ENCODE measurements at regions of chr6 and their contacts with region 1.

Region 1: DNA sequence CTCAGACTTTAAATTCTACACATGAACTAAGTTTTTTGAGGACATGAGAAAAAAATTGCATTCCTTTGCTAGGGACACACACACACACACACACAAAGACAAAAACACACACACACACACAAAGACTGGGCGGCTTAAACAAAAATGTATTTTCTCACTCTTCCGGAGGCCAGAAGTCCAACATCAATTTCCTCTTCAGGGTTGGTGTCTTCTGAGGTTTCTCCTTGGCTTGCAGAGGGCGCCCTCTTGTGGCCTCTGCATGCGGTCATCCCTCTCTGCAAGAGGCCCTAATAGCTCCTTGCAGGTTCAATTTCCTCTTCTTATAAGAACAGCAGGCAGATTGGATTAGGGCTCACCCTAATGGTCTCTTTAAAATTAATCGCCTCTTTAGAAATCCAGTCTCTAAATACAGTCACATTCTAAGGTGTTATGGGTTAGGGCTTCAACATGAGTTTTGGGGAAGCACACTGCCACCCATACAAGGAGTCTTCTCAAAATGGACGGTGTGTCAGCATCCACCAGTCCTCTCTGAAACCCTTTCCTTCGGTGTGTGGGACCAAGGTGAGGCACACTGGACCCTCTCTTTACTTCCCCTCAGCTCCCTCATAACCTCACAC is 61.4 kb downstream of the GPR6 start:
- DNase-seq: peak; percentile 90
- ATAC-seq: peak; percentile 85
- H3K4me3 ChIP-seq: peak overlapping the region; percentile 43 to 62 (median 59)
- H3K4me3 Mint-ChIP-seq: peak overlapping the region; percentile 88
- H3K27ac ChIP-seq: peak overlapping the region; percentile 48 to 66
- H3K27ac Mint-ChIP-seq: peak overlapping the region; percentile 86
- H3K4me1 ChIP-seq: peaks cover 8 to 28% of the 10 kb centered on the region in 2 donors
- H3K4me1 Mint-ChIP-seq: peaks cover 20% of the 10 kb centered on the region
- H3K27me3 ChIP-seq: no peaks in the 10 kb centered on the region
- H3K27me3 Mint-ChIP-seq: no peaks in the 10 kb centered on the region
- CTCF ChIP-seq: peak; percentile 82

Region 2: GRCh38 chr6:109526905-109527628 is 512.4 kb before region 1 on chr6:
- CTCF ChIA-PET with region 1: interaction called, 59 read pairs
- POLR2A ChIA-PET with region 1: no interaction called
- intact Hi-C with region 1: no loop called
- DNase-seq: peak; percentile 74
- ATAC-seq: peak; percentile 66
- H3K4me3 ChIP-seq: no peak overlapping the region
- H3K4me3 Mint-ChIP-seq: no peak overlapping the region
- H3K27ac ChIP-seq: no peak overlapping the region
- H3K27ac Mint-ChIP-seq: no peak overlapping the region
- H3K4me1 ChIP-seq: peaks cover 0 to 3% of the 10 kb centered on the region in 2 donors
- H3K4me1 Mint-ChIP-seq: peaks cover 4% of the 10 kb centered on the region
- H3K27me3 ChIP-seq: no peaks in the 10 kb centered on the region
- H3K27me3 Mint-ChIP-seq: no peaks in the 10 kb centered on the region
- CTCF ChIP-seq: peak; percentile 74

Region 3: GRCh38 chr6:109705258-109705657 is 334.2 kb before region 1 on chr6:
- CTCF ChIA-PET with region 1: interaction called, 340 read pairs
- POLR2A ChIA-PET with region 1: interaction called, 7 read pairs
- intact Hi-C with region 1: loop called (anchors 1 kb)
- DNase-seq: peak; percentile 89
- ATAC-seq: peak; percentile 99
- H3K4me3 ChIP-seq: no peak overlapping the region
- H3K4me3 Mint-ChIP-seq: no peak overlapping the region
- H3K27ac ChIP-seq: no peak overlapping the region
- H3K27ac Mint-ChIP-seq: no peak overlapping the region
- H3K4me1 ChIP-seq: peaks cover 24 to 25% of the 10 kb centered on the region in 2 donors
- H3K4me1 Mint-ChIP-seq: peaks cover 65% of the 10 kb centered on the region
- H3K27me3 ChIP-seq: no peaks in the 10 kb centered on the region
- H3K27me3 Mint-ChIP-seq: no peaks in the 10 kb centered on the region
- CTCF ChIP-seq: peak; percentile 98

Region 4: GRCh38 chr6:109772961-109773431 is 266.5 kb before region 1 on chr6:
- CTCF ChIA-PET with region 1: interaction called, 14 read pairs
- POLR2A ChIA-PET with region 1: no interaction called
- intact Hi-C with region 1: no loop called
- DNase-seq: no peak
- ATAC-seq: no peak
- H3K4me3 ChIP-seq: no peak overlapping the region
- H3K4me3 Mint-ChIP-seq: no peak overlapping the region
- H3K27ac ChIP-seq: peak overlapping the region in 1 of 2 donors; percentile 38
- H3K27ac Mint-ChIP-seq: peak overlapping the region; percentile 77
- H3K4me1 ChIP-seq: peaks cover 45 to 46% of the 10 kb centered on the region in 2 donors
- H3K4me1 Mint-ChIP-seq: peaks cover 49% of the 10 kb centered on the region
- H3K27me3 ChIP-seq: no peaks in the 10 kb centered on the region
- H3K27me3 Mint-ChIP-seq: no peaks in the 10 kb centered on the region
- CTCF ChIP-seq: no peak

Region 5: GRCh38 chr6:110029144-110029543 is 10.3 kb before region 1 on chr6:
- CTCF ChIA-PET with region 1: interaction called, 47 read pairs
- POLR2A ChIA-PET with region 1: no interaction called
- intact Hi-C with region 1: no loop called
- DNase-seq: no peak
- ATAC-seq: no peak
- H3K4me3 ChIP-seq: no peak overlapping the region
- H3K4me3 Mint-ChIP-seq: no peak overlapping the region
- H3K27ac ChIP-seq: no peak overlapping the region
- H3K27ac Mint-ChIP-seq: no peak overlapping the region
- H3K4me1 ChIP-seq: no peaks in the 10 kb centered on the region
- H3K4me1 Mint-ChIP-seq: no peaks in the 10 kb centered on the region
- H3K27me3 ChIP-seq: no peaks in the 10 kb centered on the region
- H3K27me3 Mint-ChIP-seq: no peaks in the 10 kb centered on the region
- CTCF ChIP-seq: no peak

Region 6: GRCh38 chr6:110179401-110180227 is 140.1 kb after region 1 on chr6 and contains the start of gene WASF1:
- CTCF ChIA-PET with region 1: interaction called, 14 read pairs
- POLR2A ChIA-PET with region 1: no interaction called
- intact Hi-C with region 1: no loop called
- DNase-seq: peak; percentile 95
- ATAC-seq: peak; percentile 78
- H3K4me3 ChIP-seq: peak within 1 kb of the TSS; percentile 66 to 100 (median 90)
- H3K4me3 Mint-ChIP-seq: no peak within 1 kb of the TSS
- H3K27ac ChIP-seq: peak within 1 kb of the TSS; percentile 72 to 88
- H3K27ac Mint-ChIP-seq: peak within 1 kb of the TSS; percentile 94
- H3K4me1 ChIP-seq: peaks cover 27 to 36% of the 10 kb centered on the region in 2 donors
- H3K4me1 Mint-ChIP-seq: peaks cover 8% of the 10 kb centered on the region
- H3K27me3 ChIP-seq: no peaks in the 10 kb centered on the region
- H3K27me3 Mint-ChIP-seq: no peaks in the 10 kb centered on the region
- CTCF ChIP-seq: no peak
- total RNA-seq, gene WASF1: 8.4 and 10.8 TPM in 2 replicates

Region 7: DNA sequence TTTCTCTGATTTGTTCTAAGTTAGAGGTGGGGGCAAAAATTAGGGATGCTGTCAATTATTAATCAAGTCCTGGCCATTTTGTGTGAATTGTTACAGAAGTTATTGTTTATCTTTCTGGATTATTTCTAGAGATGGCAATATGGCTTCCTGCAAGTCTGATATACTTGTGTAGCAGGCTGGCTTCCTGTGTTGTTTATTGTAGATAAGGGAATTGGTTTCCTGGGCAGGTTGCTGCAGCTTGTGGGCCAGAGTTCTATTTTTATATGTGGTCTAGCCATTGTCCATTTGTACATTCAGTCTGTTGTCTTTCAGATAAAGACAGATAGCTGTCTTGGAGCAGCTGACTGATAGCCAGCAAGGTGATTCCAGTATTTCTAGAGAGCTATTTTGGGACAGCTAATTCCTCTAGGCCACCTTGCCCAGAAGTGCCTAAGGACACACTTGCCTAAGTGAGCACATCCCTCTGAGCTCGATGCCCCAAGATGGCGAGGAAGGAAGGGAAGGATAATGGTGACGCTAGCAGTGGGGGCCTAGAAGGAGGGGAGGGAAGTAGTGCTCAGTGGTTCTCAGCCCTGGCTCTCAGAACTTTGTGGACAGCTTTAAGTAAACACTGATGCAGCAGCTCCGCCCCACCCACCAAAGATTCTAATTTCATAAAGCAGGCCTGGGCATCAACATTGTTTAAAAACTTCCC is 350.4 kb after region 1 on chr6:
- CTCF ChIA-PET with region 1: interaction called, 134 read pairs
- POLR2A ChIA-PET with region 1: no interaction called
- intact Hi-C with region 1: loop called (anchors 1 kb)
- DNase-seq: no peak
- ATAC-seq: no peak
- H3K4me3 ChIP-seq: no peak overlapping the region
- H3K4me3 Mint-ChIP-seq: no peak overlapping the region
- H3K27ac ChIP-seq: no peak overlapping the region
- H3K27ac Mint-ChIP-seq: no peak overlapping the region
- H3K4me1 ChIP-seq: no peaks in the 10 kb centered on the region
- H3K4me1 Mint-ChIP-seq: no peaks in the 10 kb centered on the region
- H3K27me3 ChIP-seq: no peaks in the 10 kb centered on the region
- H3K27me3 Mint-ChIP-seq: no peaks in the 10 kb centered on the region
- CTCF ChIP-seq: no peak

Region 8: GRCh38 chr6:110567957-110568696 is 528.7 kb after region 1 on chr6:
- CTCF ChIA-PET with region 1: no interaction called
- POLR2A ChIA-PET with region 1: no interaction called
- intact Hi-C with region 1: no loop called
- DNase-seq: peak; percentile 24
- ATAC-seq: peak; percentile 49
- H3K4me3 ChIP-seq: no peak overlapping the region
- H3K4me3 Mint-ChIP-seq: no peak overlapping the region
- H3K27ac ChIP-seq: no peak overlapping the region
- H3K27ac Mint-ChIP-seq: peak overlapping the region; percentile 27
- H3K4me1 ChIP-seq: peaks cover 3 to 18% of the 10 kb centered on the region in 2 donors
- H3K4me1 Mint-ChIP-seq: peaks cover 10% of the 10 kb centered on the region
- H3K27me3 ChIP-seq: no peaks in the 10 kb centered on the region
- H3K27me3 Mint-ChIP-seq: no peaks in the 10 kb centered on the region
- CTCF ChIP-seq: no peak

Measured in B cell (primary cell).